B cell (primary cell): ENCODE measurements at regions of chr19 and their contacts with region 1.

Region 1: GRCh38 chr19:16584248-16585141 is 12.3 kb upstream of the SLC35E1 start:
- DNase-seq: peak; percentile 98
- ATAC-seq: peak; percentile 53
- H3K4me3 ChIP-seq: peak overlapping the region; percentile 68 to 93 (median 85)
- H3K4me3 Mint-ChIP-seq: peak overlapping the region; percentile 97
- H3K27ac ChIP-seq: peak overlapping the region; percentile 98 to 99
- H3K27ac Mint-ChIP-seq: peak overlapping the region; percentile 100
- H3K4me1 ChIP-seq: peaks cover 62 to 80% of the 10 kb centered on the region in 2 donors
- H3K4me1 Mint-ChIP-seq: peaks cover 89% of the 10 kb centered on the region
- H3K27me3 ChIP-seq: no peaks in the 10 kb centered on the region
- H3K27me3 Mint-ChIP-seq: no peaks in the 10 kb centered on the region
- CTCF ChIP-seq: no peak

Region 2: GRCh38 chr19:16111160-16111908 is 473.2 kb before region 1 on chr19 and contains the start of gene RAB8A:
- CTCF ChIA-PET with region 1: no interaction called
- POLR2A ChIA-PET with region 1: no interaction called
- intact Hi-C with region 1: loop called (anchors 10 kb)
- DNase-seq: peak; percentile 100
- ATAC-seq: peak; percentile 88
- H3K4me3 ChIP-seq: peak within 1 kb of the TSS; percentile 50 to 99 (median 96)
- H3K4me3 Mint-ChIP-seq: peak within 1 kb of the TSS; percentile 96
- H3K27ac ChIP-seq: peak within 1 kb of the TSS; percentile 74 to 97
- H3K27ac Mint-ChIP-seq: peak within 1 kb of the TSS; percentile 95
- H3K4me1 ChIP-seq: peaks cover 29 to 53% of the 10 kb centered on the region in 2 donors
- H3K4me1 Mint-ChIP-seq: peaks cover 42% of the 10 kb centered on the region
- H3K27me3 ChIP-seq: no peaks in the 10 kb centered on the region
- H3K27me3 Mint-ChIP-seq: no peaks in the 10 kb centered on the region
- CTCF ChIP-seq: peak; percentile 91
- total RNA-seq, gene RAB8A: 115 and 117 TPM in 2 replicates

Region 3: GRCh38 chr19:16330368-16330801 is 254.1 kb before region 1 on chr19:
- CTCF ChIA-PET with region 1: interaction called, 3 read pairs
- POLR2A ChIA-PET with region 1: interaction called, 3 read pairs
- intact Hi-C with region 1: loop called (anchors 2 kb)
- DNase-seq: peak; percentile 95
- ATAC-seq: peak; percentile 63
- H3K4me3 ChIP-seq: peak overlapping the region in 1 of 5 experiments; percentile 20
- H3K4me3 Mint-ChIP-seq: peak overlapping the region; percentile 70
- H3K27ac ChIP-seq: peak overlapping the region; percentile 23 to 35
- H3K27ac Mint-ChIP-seq: peak overlapping the region; percentile 98
- H3K4me1 ChIP-seq: peaks cover 24 to 40% of the 10 kb centered on the region in 2 donors
- H3K4me1 Mint-ChIP-seq: peaks cover 51% of the 10 kb centered on the region
- H3K27me3 ChIP-seq: no peaks in the 10 kb centered on the region
- H3K27me3 Mint-ChIP-seq: no peaks in the 10 kb centered on the region
- CTCF ChIP-seq: no peak

Region 4: GRCh38 chr19:16446724-16447368 is 137.6 kb before region 1 on chr19:
- CTCF ChIA-PET with region 1: interaction called, 3 read pairs
- POLR2A ChIA-PET with region 1: interaction called, 19 read pairs
- intact Hi-C with region 1: loop called (anchors 1 kb)
- DNase-seq: peak; percentile 79
- ATAC-seq: peak; percentile 34
- H3K4me3 ChIP-seq: peak overlapping the region in 1 of 5 experiments; percentile 26
- H3K4me3 Mint-ChIP-seq: peak overlapping the region; percentile 76
- H3K27ac ChIP-seq: peak overlapping the region; percentile 93 to 98
- H3K27ac Mint-ChIP-seq: peak overlapping the region; percentile 97
- H3K4me1 ChIP-seq: peaks cover 86 to 94% of the 10 kb centered on the region in 2 donors
- H3K4me1 Mint-ChIP-seq: peaks cover 85% of the 10 kb centered on the region
- H3K27me3 ChIP-seq: no peaks in the 10 kb centered on the region
- H3K27me3 Mint-ChIP-seq: no peaks in the 10 kb centered on the region
- CTCF ChIP-seq: no peak

Region 5: GRCh38 chr19:16628183-16628983 is 43.9 kb after region 1 on chr19 and contains the start of gene MED26:
- CTCF ChIA-PET with region 1: interaction called, 12 read pairs
- POLR2A ChIA-PET with region 1: interaction called, 43 read pairs
- intact Hi-C with region 1: loop called (anchors 1 kb)
- DNase-seq: peak; percentile 97
- ATAC-seq: peak; percentile 93
- H3K4me3 ChIP-seq: peak within 1 kb of the TSS; percentile 18 to 93 (median 87)
- H3K4me3 Mint-ChIP-seq: peak within 1 kb of the TSS; percentile 97
- H3K27ac ChIP-seq: peak within 1 kb of the TSS; percentile 87 to 93
- H3K27ac Mint-ChIP-seq: peak within 1 kb of the TSS; percentile 98
- H3K4me1 ChIP-seq: peaks cover 23 to 27% of the 10 kb centered on the region in 2 donors
- H3K4me1 Mint-ChIP-seq: peaks cover 53% of the 10 kb centered on the region
- H3K27me3 ChIP-seq: no peaks in the 10 kb centered on the region
- H3K27me3 Mint-ChIP-seq: no peaks in the 10 kb centered on the region
- CTCF ChIP-seq: no peak
- total RNA-seq, gene MED26: 32.2 and 33.6 TPM in 2 replicates

Region 6: GRCh38 chr19:17305517-17306284 is 721.2 kb after region 1 on chr19 and contains the start of gene MRPL34:
- CTCF ChIA-PET with region 1: no interaction called
- POLR2A ChIA-PET with region 1: no interaction called
- intact Hi-C with region 1: loop called (anchors 5 kb)
- DNase-seq: peak; percentile 100
- ATAC-seq: peak; percentile 69
- H3K4me3 ChIP-seq: peak within 1 kb of the TSS; percentile 49 to 74 (median 73)
- H3K4me3 Mint-ChIP-seq: peak within 1 kb of the TSS; percentile 91
- H3K27ac ChIP-seq: peak within 1 kb of the TSS; percentile 70 to 71
- H3K27ac Mint-ChIP-seq: peak within 1 kb of the TSS; percentile 90
- H3K4me1 ChIP-seq: peaks cover 38 to 56% of the 10 kb centered on the region in 2 donors
- H3K4me1 Mint-ChIP-seq: peaks cover 56% of the 10 kb centered on the region
- H3K27me3 ChIP-seq: no peaks in the 10 kb centered on the region
- H3K27me3 Mint-ChIP-seq: no peaks in the 10 kb centered on the region
- CTCF ChIP-seq: peak; percentile 76
- total RNA-seq, gene MRPL34: 40.7 and 45.7 TPM in 2 replicates